ENCODE measurements at regions of chr16 and their contacts with region 1.

Region 1: DNA sequence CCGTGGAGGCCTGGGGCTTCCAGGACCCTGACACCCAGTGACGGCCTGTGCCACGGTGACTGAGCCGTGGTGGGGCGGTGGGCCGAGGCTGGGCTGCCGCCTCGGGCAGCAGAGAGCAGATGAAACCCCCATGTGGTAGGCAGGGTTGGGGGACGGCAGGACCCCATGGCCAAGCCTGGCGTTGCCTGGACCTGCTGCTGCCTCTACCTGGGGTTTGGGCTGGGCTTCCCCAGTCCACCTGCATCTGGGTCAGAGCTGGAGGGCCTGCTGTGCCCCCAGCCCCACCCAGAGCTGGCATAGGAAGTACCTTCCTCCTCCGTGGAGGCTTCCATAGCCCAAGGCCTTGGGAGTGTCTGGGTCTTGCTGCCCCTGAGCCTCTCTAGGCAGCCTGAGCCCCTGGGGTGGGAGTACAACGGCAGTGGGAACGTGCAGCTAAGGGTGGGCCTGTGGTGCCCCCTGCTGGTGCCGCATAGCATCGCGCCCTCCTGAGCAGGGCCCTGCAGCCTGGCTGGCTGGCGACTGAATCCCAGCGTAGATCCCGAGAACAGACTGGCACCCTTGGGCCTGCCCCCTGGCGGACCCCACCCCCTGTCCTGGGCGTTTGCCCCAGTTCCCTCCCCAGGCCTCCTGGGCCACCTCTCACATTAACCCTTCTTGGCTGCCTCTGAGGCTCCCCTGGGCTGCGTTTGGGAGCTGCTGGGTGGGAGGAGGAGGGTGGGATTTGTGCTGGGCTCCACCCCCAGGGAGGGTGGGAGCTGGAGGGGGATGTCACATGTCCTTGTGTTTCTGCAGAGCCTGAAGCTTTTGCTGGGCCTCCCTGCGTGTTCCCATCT is 12.6 kb upstream of the ATP6V0C start:
- DNase-seq: no peak
- H3K4me3 ChIP-seq: peak overlapping the region; percentile 26 to 37
- H3K27ac ChIP-seq: peak overlapping the region; percentile 74
- H3K4me1 ChIP-seq: peaks cover 62% of the 10 kb centered on the region
- H3K27me3 ChIP-seq: no peaks in the 10 kb centered on the region
- CTCF ChIP-seq: peak; percentile 96 to 98 (median 98)
- POLR2A ChIP-seq: no peak

Region 2: GRCh38 chr16:2256531-2257140 is 244.5 kb before region 1 on chr16:
- intact Hi-C with region 1: no loop called
- DNase-seq: no peak
- H3K4me3 ChIP-seq: no peak overlapping the region
- H3K27ac ChIP-seq: no peak overlapping the region
- H3K4me1 ChIP-seq: peaks cover 7% of the 10 kb centered on the region
- H3K27me3 ChIP-seq: no peaks in the 10 kb centered on the region
- CTCF ChIP-seq: no peak
- POLR2A ChIP-seq: no peak

Region 3: DNA sequence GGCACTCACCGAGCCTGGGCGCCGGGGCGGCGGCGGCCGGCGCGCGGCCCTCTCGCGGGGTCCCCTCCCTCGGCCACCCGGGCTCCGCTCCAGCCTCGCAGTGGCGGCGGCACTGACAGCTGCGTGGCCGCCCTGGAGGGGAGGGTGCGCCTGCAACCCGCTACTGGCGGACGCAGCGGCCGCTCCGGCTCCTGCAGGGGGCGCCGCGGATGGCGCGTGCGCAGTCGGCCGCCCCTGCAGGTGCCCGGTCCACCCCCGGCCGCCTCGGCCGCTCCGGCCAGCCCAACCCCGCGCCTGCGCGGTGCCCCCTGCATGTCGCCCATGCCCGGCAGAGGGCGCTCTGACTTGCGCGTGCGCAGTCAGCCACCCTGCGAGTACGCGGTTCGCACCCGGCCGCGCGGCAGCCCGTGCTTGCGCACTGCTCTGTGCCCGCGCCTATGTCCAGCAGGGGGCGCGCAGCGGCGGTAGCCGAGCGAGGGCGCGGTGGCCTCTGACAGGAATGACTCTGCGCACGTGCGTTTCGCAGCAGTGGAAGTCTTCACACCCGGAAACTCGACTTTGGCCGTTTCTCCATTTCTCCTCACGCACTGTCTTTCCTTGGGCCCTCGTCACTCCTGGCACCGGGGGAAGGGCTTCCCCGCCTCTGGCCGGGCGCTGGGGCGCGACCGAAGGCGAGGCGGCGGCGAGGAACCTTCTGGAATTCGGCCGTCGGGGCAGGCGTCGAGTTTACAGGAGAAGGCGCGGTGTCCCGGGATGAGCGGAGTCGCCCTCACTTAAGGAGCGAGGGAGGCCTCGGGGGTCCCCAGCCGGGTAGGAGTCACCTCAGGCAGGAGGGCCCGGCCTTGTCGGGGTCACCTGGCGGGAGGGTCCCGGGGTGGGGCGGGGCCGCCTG is 160.3 kb before region 1 on chr16 and contains the start of gene ABCA3:
- intact Hi-C with region 1: loop called (anchors 2 kb)
- DNase-seq: no peak
- H3K4me3 ChIP-seq: peak within 1 kb of the TSS; percentile 61 to 88
- H3K27ac ChIP-seq: peak within 1 kb of the TSS; percentile 47
- H3K4me1 ChIP-seq: peaks cover 22% of the 10 kb centered on the region
- H3K27me3 ChIP-seq: no peaks in the 10 kb centered on the region
- CTCF ChIP-seq: peak; percentile 97 to 100 (median 98)
- POLR2A ChIP-seq: no peak
- total RNA-seq, gene ABCA3: 5.4 TPM

Region 4: DNA sequence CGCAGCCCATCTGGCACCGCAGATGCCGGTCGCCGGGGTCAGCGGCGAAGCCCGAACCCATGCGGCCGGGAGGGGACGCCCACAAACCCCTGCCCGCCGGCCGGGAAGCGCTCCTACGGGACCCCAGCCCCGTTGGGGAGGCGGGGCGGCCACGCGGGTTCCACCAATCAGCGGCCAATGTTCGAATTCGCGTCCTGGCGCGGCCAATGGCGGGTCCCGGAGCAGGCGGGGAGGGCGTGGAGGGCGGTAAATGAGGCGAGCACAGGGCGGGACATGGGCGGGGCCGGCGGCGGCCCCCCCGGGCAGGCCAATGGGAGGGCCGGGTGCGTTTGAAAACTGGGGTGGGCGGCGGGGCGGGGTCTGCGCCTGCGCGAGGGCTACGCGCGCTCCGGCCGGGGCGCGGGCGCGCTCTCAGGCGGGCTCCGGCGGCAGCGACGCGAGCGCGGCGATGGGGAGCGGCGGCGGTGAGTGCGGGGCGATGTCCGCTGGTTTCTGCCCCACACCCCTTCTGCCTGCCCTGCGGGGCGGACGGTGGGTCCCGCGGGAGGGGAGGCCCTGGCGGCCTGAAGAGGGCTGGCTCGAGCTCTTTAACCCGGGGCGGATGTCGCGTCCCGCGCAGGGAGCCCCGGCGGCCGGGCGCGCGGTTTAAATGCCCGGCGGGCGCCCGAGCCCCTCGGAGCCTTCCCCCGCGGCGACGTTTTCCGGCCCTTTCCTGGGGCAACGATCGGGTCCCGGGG is 71.9 kb before region 1 on chr16 and contains the start of gene CCNF:
- intact Hi-C with region 1: loop called (anchors 5 kb)
- DNase-seq: peak in 1 of 2 donors; percentile 95
- H3K4me3 ChIP-seq: peak within 1 kb of the TSS; percentile 78 to 86
- H3K27ac ChIP-seq: peak within 1 kb of the TSS; percentile 67
- H3K4me1 ChIP-seq: peaks cover 20% of the 10 kb centered on the region
- H3K27me3 ChIP-seq: no peaks in the 10 kb centered on the region
- CTCF ChIP-seq: no peak
- POLR2A ChIP-seq: peak in 1 of 2 donors; percentile 52
- total RNA-seq, gene CCNF: 2.5 TPM